ENCODE measurements at regions of chr21 and their contacts with region 1.

Region 1: GRCh38 chr21:28884976-28885852 is 107.5 kb downstream of the LTN1 start:
- DNase-seq: peak; percentile 86 to 88
- ATAC-seq: peak; percentile 97 to 100 (median 99)
- H3K4me3 ChIP-seq: peak overlapping the region; percentile 42 to 70 (median 60)
- H3K27ac ChIP-seq: peak overlapping the region; percentile 80 to 97 (median 92)
- H3K4me1 ChIP-seq: peaks cover 0 to 19% (median 10%) of the 10 kb centered on the region in 9 donors
- H3K27me3 ChIP-seq: peaks cover 0 to 6% (median 0%) of the 10 kb centered on the region in 7 donors
- CTCF ChIP-seq: no peak

Region 2: GRCh38 chr21:28754127-28754611 is 131.0 kb before region 1 on chr21:
- intact Hi-C with region 1: loop called in 1 of 10 experiments (anchors 10 kb)
- DNase-seq: peak; percentile 25 to 87
- ATAC-seq: peak; percentile 94 to 99 (median 98)
- H3K4me3 ChIP-seq: peak overlapping the region in 2 of 10 donors; percentile 11 to 26
- H3K27ac ChIP-seq: peak overlapping the region; percentile 81 to 97 (median 92)
- H3K4me1 ChIP-seq: peaks cover 8 to 68% (median 34%) of the 10 kb centered on the region in 9 donors
- H3K27me3 ChIP-seq: no peaks in the 10 kb centered on the region
- CTCF ChIP-seq: no peak

Region 3: GRCh38 chr21:28834335-28835238 is 50.6 kb before region 1 on chr21:
- intact Hi-C with region 1: no loop called
- DNase-seq: no peak
- ATAC-seq: no peak
- H3K4me3 ChIP-seq: no peak overlapping the region
- H3K27ac ChIP-seq: no peak overlapping the region
- H3K4me1 ChIP-seq: peaks cover 0 to 9% (median 0%) of the 10 kb centered on the region in 9 donors
- H3K27me3 ChIP-seq: no peaks in the 10 kb centered on the region
- CTCF ChIP-seq: no peak

Region 4: GRCh38 chr21:28932717-28933116 is 47.5 kb after region 1 on chr21:
- intact Hi-C with region 1: no loop called
- DNase-seq: no peak
- ATAC-seq: no peak
- H3K4me3 ChIP-seq: no peak overlapping the region
- H3K27ac ChIP-seq: no peak overlapping the region
- H3K4me1 ChIP-seq: no peaks in the 10 kb centered on the region
- H3K27me3 ChIP-seq: no peaks in the 10 kb centered on the region
- CTCF ChIP-seq: no peak

Measured in heart right ventricle (tissue), 16 donors.